Right ventricle myocardium inferior (tissue), 1 donor: ENCODE measurements at regions of chr15 and their contacts with region 1.

Region 1: GRCh38 chr15:91055548-91056331 is 33.3 kb upstream of the VPS33B start:
- DNase-seq: no peak
- ATAC-seq: peak; percentile 81

Region 2: DNA sequence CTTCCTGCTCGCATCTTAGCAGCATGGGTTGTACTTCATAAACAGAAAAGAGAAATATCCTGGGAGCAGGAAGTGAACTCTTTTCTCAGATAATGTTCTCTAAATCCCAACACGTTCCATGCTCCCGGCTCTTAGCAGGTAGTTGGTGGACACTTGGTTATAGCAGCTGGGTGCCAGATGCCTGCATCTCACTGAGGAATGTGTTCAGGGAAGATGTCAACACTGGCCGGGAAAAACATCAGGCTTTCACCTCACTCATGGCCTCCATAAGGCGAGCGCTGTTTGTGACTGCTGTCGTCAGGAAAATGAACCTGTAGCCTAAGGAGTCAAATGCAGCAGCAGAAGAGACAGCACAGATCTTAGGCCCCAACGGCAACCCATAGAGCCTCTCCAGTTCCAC is 57.0 kb before region 1 on chr15:
- intact Hi-C with region 1: no loop called
- DNase-seq: no peak
- ATAC-seq: no peak

Region 3: GRCh38 chr15:91142114-91142731 is 86.5 kb after region 1 on chr15:
- intact Hi-C with region 1: loop called (anchors 1 kb)
- DNase-seq: no peak
- ATAC-seq: no peak

Region 4: GRCh38 chr15:91224755-91225380 is 169.1 kb after region 1 on chr15:
- intact Hi-C with region 1: loop called (anchors 1 kb)
- DNase-seq: no peak
- ATAC-seq: no peak

Region 5: GRCh38 chr15:91271565-91272153 is 215.9 kb after region 1 on chr15:
- intact Hi-C with region 1: loop called (anchors 1 kb)
- DNase-seq: no peak
- ATAC-seq: peak; percentile 57